CD8-positive, alpha-beta T cell (primary cell): ENCODE measurements at regions of chr2 and their contacts with region 1.

Region 1: DNA sequence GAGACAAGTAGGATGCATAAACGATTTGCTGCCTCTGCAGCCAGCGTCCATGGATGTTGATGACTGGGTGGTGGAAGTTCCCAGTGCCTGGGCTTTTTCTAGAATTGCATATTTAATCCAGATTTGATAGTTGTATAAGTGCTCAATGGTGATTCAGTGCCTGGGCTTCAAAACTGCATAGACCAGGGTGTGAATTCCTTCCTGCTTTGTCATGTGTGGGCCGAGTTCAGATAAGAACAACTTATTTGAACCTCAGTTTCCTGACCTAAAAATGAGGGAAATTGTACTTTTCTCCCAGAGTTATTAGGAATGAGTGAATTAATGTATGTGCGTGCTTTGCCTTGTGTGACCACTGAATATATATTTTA is 154.6 kb downstream of the WDSUB1 start:
- DNase-seq: no peak
- ATAC-seq: no peak
- H3K4me3 ChIP-seq: no peak overlapping the region
- H3K4me3 Mint-ChIP-seq: no peak overlapping the region
- H3K27ac ChIP-seq: no peak overlapping the region
- H3K27ac Mint-ChIP-seq: no peak overlapping the region
- H3K4me1 ChIP-seq: no peaks in the 10 kb centered on the region
- H3K4me1 Mint-ChIP-seq: peaks cover 7% of the 10 kb centered on the region
- H3K27me3 ChIP-seq: no peaks in the 10 kb centered on the region
- H3K27me3 Mint-ChIP-seq: no peaks in the 10 kb centered on the region
- CTCF ChIP-seq: no peak

Region 2: DNA sequence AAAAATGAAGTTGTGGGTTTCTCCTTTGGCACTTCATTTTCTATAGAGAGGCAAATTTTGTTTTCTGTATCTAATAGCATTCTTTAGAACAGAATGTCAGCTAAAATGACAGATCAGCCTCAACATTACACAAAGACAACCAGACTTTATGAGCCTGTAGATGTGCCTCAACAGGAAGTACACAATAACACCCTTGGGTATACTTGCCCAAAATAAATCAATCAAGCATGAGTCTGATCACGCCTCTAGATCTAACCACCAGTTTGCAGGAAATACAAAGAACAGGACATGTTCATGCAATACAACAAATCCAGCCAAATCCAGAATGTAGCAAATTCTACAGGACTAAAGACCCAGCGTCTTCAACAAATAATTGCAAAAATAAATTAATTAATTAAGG is 348.0 kb before region 1 on chr2:
- CTCF ChIA-PET with region 1: no interaction called
- POLR2A ChIA-PET with region 1: no interaction called
- intact Hi-C with region 1: no loop called
- DNase-seq: no peak
- ATAC-seq: no peak
- H3K4me3 ChIP-seq: no peak overlapping the region
- H3K4me3 Mint-ChIP-seq: no peak overlapping the region
- H3K27ac ChIP-seq: no peak overlapping the region
- H3K27ac Mint-ChIP-seq: no peak overlapping the region
- H3K4me1 ChIP-seq: no peaks in the 10 kb centered on the region
- H3K4me1 Mint-ChIP-seq: no peaks in the 10 kb centered on the region
- H3K27me3 ChIP-seq: no peaks in the 10 kb centered on the region
- H3K27me3 Mint-ChIP-seq: peaks cover 11% of the 10 kb centered on the region
- CTCF ChIP-seq: no peak

Region 3: DNA sequence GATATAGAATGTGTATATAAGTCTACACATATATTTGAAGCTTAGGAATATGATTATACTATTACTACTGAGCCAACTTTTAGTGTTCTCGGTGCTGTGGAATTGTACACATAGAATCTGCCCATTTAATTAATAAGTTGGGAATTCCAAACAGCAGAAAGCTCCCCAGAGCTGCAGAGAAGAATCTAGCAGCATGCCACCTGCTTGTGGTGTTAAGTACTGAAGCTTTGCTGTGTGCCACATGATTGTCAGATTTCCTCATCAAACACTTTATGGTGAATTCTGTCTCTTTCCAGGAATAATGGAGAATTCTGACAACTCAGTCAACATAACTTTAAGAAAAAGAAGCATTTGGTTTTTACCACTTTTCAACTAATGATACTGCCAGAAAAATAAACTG is 36.8 kb after region 1 on chr2:
- CTCF ChIA-PET with region 1: no interaction called
- POLR2A ChIA-PET with region 1: no interaction called
- intact Hi-C with region 1: no loop called
- DNase-seq: no peak
- ATAC-seq: no peak
- H3K4me3 ChIP-seq: no peak overlapping the region
- H3K4me3 Mint-ChIP-seq: no peak overlapping the region
- H3K27ac ChIP-seq: no peak overlapping the region
- H3K27ac Mint-ChIP-seq: no peak overlapping the region
- H3K4me1 ChIP-seq: no peaks in the 10 kb centered on the region
- H3K4me1 Mint-ChIP-seq: peaks cover 1% of the 10 kb centered on the region
- H3K27me3 ChIP-seq: no peaks in the 10 kb centered on the region
- H3K27me3 Mint-ChIP-seq: no peaks in the 10 kb centered on the region
- CTCF ChIP-seq: no peak

Region 4: GRCh38 chr2:159807183-159808031 is 675.5 kb after region 1 on chr2:
- CTCF ChIA-PET with region 1: no interaction called
- POLR2A ChIA-PET with region 1: no interaction called
- intact Hi-C with region 1: loop called (anchors 5 to 10 kb)
- DNase-seq: peak in 3 of 9 experiments; percentile 6 to 46 (median 25)
- ATAC-seq: no peak
- H3K4me3 ChIP-seq: no peak overlapping the region
- H3K4me3 Mint-ChIP-seq: no peak overlapping the region
- H3K27ac ChIP-seq: no peak overlapping the region
- H3K27ac Mint-ChIP-seq: no peak overlapping the region
- H3K4me1 ChIP-seq: no peaks in the 10 kb centered on the region
- H3K4me1 Mint-ChIP-seq: no peaks in the 10 kb centered on the region
- H3K27me3 ChIP-seq: no peaks in the 10 kb centered on the region
- H3K27me3 Mint-ChIP-seq: no peaks in the 10 kb centered on the region
- CTCF ChIP-seq: peak; percentile 27

Region 5: DNA sequence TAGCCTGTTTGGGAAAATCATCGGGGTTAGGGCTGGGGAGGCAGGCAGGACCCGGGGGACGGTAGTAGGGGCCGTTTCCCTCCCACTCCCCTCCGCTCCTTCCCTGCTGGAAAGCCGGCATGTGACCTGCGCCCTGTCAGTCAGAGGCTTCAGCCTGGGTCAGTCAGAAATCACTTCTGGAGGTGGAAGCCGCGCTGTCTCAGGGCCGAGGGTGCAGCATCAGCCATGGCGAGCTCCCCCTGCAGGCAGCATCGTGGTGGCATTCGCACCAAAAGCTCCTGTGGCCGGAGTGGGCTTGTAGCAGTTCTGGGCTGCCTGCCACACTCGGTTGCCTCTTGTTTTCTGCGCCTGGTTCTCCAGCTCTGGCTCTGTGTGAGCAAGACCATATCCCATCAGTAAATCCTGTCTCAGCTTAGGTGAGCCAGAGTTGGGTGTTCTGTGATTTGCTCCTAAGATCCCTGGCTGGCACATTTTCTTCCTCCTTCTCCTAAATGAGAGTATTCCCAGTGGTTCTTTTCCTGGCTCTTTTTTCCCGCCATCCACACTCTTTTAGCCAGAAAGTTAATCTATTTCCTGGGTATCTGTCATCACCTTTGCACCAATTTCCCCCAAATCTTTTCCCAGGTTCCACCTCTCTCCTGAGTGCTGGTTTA is 790.0 kb after region 1 on chr2:
- CTCF ChIA-PET with region 1: no interaction called
- POLR2A ChIA-PET with region 1: no interaction called
- intact Hi-C with region 1: loop called in 1 of 2 experiments (anchors 2 kb)
- DNase-seq: peak; percentile 53 to 78 (median 71)
- ATAC-seq: peak; percentile 91
- H3K4me3 ChIP-seq: no peak overlapping the region
- H3K4me3 Mint-ChIP-seq: no peak overlapping the region
- H3K27ac ChIP-seq: no peak overlapping the region
- H3K27ac Mint-ChIP-seq: no peak overlapping the region
- H3K4me1 ChIP-seq: peaks cover 6% of the 10 kb centered on the region
- H3K4me1 Mint-ChIP-seq: no peaks in the 10 kb centered on the region
- H3K27me3 ChIP-seq: peaks cover 0 to 4% of the 10 kb centered on the region in 2 experiments
- H3K27me3 Mint-ChIP-seq: peaks cover 17% of the 10 kb centered on the region
- CTCF ChIP-seq: peak; percentile 75